Naive thymus-derived CD4-positive, alpha-beta T cell (primary cell): ENCODE measurements at regions of chr1 and their contacts with region 1.

Region 1: GRCh38 chr1:169367486-169368405 is at the starts of genes BLZF1 and NME7:
- DNase-seq: peak; percentile 91 to 99 (median 98)
- ATAC-seq: peak; percentile 99
- H3K4me3 ChIP-seq: peak within 1 kb of the TSS; percentile 87
- H3K4me3 Mint-ChIP-seq: peak within 1 kb of the TSS in 3 of 10 donors; percentile 19 to 72 (median 71)
- H3K27ac ChIP-seq: peak within 1 kb of the TSS; percentile 85
- H3K27ac Mint-ChIP-seq: peak within 1 kb of the TSS in 2 of 9 donors; percentile 73 to 78
- H3K4me1 ChIP-seq: peaks cover 4 to 14% of the 10 kb centered on the region in 2 donors
- H3K4me1 Mint-ChIP-seq: peaks cover 20 to 48% (median 28%) of the 10 kb centered on the region in 7 donors
- H3K27me3 ChIP-seq: no peaks in the 10 kb centered on the region
- H3K27me3 Mint-ChIP-seq: no peaks in the 10 kb centered on the region
- total RNA-seq, gene BLZF1: 9.9 to 26.8 (median 17.5) TPM
- total RNA-seq, gene NME7: 8.6 to 14.5 (median 12.7) TPM

Region 2: DNA sequence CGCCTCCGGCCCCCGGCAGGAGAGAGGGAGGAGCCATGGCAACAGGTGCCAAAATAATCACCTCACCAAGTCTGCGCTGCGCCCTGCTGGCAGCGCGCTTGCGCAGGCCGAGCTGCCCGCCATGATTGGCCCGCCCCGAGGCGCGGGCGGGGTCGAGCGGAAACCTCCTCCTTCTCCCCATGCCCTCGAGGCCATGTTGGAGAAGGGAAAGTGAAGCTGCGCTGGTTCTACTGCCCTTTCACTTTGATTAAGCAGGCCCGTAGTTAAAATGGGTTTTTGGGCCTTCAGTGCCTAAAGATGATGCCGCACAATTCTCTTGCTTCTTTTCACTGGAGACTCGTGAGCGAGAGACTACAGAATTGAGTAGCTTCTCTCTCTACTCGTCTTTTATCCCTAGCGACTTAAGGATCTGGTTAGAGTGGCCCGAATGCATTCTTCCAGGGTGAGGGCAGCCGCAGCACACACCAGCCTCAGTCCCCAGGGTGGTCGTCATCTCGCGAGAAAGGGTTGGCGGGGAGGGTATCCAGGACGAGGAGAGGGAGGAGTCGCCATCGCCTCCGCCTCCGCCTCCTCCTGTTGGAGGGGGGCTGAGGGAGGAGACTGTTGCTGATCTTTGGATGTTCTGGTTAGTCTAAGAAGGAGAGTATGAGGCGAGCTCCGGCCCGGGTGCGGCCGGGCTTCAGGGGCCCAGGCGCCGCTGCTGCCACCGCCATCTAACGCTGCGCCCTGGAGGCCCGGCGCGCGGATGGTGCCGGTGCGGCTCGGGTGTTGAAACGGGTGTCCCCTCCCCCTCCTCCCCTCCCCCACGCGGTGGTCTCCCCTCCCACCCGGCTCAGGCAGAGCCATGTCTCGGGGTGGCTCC is 1431.4 kb before region 1 on chr1 and contains the start of gene DCAF6:
- CTCF ChIA-PET with region 1: no interaction called
- POLR2A ChIA-PET with region 1: no interaction called
- intact Hi-C with region 1: loop called in 1 of 2 experiments (anchors 1 kb)
- DNase-seq: peak; percentile 94 to 99 (median 99)
- ATAC-seq: peak; percentile 89
- H3K4me3 ChIP-seq: peak within 1 kb of the TSS; percentile 89
- H3K4me3 Mint-ChIP-seq: peak within 1 kb of the TSS; percentile 90 to 99 (median 96)
- H3K27ac ChIP-seq: peak within 1 kb of the TSS; percentile 89
- H3K27ac Mint-ChIP-seq: peak within 1 kb of the TSS; percentile 90 to 100 (median 99)
- H3K4me1 ChIP-seq: peaks cover 18 to 31% of the 10 kb centered on the region in 2 donors
- H3K4me1 Mint-ChIP-seq: peaks cover 29 to 58% (median 40%) of the 10 kb centered on the region in 7 donors
- H3K27me3 ChIP-seq: no peaks in the 10 kb centered on the region
- H3K27me3 Mint-ChIP-seq: no peaks in the 10 kb centered on the region
- total RNA-seq, gene DCAF6: 27.4 to 32.7 (median 29.1) TPM

Region 3: DNA sequence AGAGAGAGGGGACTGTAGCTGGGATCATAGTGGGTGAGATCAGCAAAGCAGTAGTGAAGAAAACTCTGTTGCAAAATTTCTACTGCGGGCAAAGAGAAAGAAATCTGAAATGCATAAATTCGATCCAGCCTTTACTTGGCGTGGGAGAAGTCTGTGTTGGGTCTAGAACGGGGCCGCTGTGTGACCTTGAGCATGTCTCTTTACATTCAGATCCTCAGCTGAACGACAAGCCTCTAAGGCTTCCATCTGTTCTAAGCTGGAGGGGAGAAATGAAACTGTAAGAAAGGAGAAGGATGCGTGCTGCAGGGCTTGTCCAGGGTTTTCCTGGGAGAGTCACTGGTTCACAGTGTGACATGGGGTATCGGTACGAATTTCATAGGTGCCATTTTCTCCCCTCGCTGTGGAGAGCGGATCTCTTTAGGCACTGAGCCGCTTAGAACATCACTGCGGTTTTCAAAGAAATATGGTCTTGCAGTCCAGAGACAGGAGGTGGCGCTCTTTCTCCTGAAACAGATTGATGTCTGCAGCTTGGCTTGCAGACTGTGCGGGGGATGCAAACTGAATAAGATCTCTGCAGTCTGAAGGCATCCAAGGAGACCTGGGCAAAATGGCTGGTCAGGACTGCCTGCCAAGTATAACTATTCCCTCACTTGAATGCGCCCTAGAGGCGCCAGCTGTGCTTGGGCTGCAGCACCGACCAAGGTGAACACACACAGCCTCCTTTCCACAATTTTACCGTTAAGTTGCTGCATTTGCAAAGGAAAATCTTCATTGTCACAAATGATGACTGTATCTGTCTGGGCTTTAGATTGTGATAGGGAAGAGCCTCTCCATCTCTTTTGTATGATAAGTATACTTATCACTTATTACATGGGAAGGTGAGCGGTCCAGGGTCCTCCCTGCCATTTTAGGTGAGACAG is 928.0 kb before region 1 on chr1:
- CTCF ChIA-PET with region 1: interaction called, 3 read pairs
- POLR2A ChIA-PET with region 1: no interaction called
- intact Hi-C with region 1: loop called (anchors 5 kb)
- DNase-seq: peak; percentile 45 to 86 (median 80)
- ATAC-seq: peak; percentile 95
- H3K4me3 ChIP-seq: peak overlapping the region; percentile 46
- H3K4me3 Mint-ChIP-seq: peak overlapping the region; percentile 48 to 88 (median 79)
- H3K27ac ChIP-seq: peak overlapping the region; percentile 17
- H3K27ac Mint-ChIP-seq: peak overlapping the region; percentile 20 to 91 (median 59)
- H3K4me1 ChIP-seq: peaks cover 28 to 43% of the 10 kb centered on the region in 2 donors
- H3K4me1 Mint-ChIP-seq: peaks cover 32 to 62% (median 45%) of the 10 kb centered on the region in 7 donors
- H3K27me3 ChIP-seq: no peaks in the 10 kb centered on the region
- H3K27me3 Mint-ChIP-seq: peaks cover 0 to 3% (median 0%) of the 10 kb centered on the region in 5 donors

Region 4: DNA sequence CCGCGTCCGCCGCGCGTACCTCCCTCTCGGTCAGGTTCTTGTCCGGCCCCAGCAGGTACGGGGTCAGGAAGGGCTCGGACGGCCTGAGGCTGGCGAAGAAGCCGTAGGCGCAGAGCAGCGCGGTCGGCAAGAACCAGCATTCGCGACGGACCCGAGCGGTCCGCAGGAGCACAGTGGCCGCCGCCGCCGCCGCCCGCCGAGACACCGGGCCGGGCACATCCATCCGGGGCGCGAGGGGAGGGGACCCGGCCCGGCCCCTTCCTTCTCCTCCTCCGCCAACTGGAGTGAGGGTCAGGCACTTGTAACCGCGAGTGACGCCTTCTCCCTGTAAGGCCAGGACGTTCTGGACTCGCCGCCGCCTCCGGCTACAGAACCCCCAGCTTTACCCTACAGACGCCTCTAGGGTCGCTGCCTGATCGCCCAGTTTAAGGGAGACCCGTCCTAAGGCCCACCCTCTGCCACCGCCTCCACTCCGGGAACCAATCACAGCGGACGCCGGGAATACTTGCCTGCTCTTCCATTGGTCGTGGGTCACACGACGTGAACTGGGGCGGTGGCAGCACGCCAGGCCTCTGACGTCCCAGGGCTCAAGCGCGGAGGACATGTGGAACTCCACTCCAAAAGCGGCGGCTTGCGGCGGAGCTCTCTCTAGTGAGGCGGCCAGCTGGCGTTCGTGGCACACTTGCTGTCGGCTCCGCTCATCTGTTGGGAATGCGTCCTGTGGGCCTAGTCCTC is 118.0 kb after region 1 on chr1 and contains the start of gene SLC19A2:
- CTCF ChIA-PET with region 1: no interaction called
- POLR2A ChIA-PET with region 1: interaction called, 5 read pairs
- intact Hi-C with region 1: loop called (anchors 1 kb)
- DNase-seq: peak; percentile 79 to 94 (median 89)
- ATAC-seq: peak; percentile 99
- H3K4me3 ChIP-seq: peak within 1 kb of the TSS; percentile 66
- H3K4me3 Mint-ChIP-seq: peak within 1 kb of the TSS; percentile 87 to 98 (median 94)
- H3K27ac ChIP-seq: peak within 1 kb of the TSS; percentile 81
- H3K27ac Mint-ChIP-seq: peak within 1 kb of the TSS; percentile 86 to 98 (median 94)
- H3K4me1 ChIP-seq: peaks cover 4 to 12% of the 10 kb centered on the region in 2 donors
- H3K4me1 Mint-ChIP-seq: peaks cover 35 to 56% (median 46%) of the 10 kb centered on the region in 7 donors
- H3K27me3 ChIP-seq: no peaks in the 10 kb centered on the region
- H3K27me3 Mint-ChIP-seq: peaks cover 0 to 8% (median 0%) of the 10 kb centered on the region in 5 donors
- total RNA-seq, gene SLC19A2: 3.7 to 5.9 (median 4.8) TPM

Region 5: DNA sequence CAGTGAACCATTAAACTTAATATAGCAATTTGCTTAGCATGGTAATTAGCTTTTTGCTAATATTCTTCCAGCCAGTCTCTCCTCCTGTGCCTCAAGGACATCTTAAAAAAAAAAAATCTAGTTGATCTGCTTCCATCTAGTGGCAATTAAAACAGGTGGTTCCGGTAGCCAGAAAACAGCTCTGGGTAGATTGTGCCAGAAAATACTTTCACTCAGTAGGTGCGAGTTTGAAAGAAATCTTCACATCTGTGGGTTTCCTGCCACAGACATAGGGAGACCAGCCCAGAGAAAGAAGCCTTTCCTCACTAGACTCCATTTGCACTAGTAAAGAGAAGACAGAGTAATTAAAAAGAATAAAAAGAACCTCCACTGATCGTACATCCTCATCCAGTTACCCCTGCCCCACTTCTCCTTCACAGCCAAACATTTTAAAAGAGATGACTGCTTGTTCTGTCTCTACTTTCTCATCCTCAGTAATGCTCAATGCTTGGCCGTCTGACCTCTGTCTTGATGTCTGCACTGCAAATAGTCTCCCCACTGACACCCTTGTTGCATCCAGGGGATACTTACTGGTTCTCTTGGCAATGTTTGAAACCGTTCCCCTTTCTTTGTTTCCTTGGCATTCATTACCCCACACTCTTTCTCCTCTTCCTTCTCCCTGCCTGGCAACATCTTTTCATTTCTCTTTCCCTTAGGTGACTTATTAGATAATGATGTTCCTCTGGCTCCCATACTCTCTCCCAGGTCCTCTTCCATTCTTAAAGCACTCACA is 326.7 kb after region 1 on chr1:
- CTCF ChIA-PET with region 1: no interaction called
- POLR2A ChIA-PET with region 1: no interaction called
- intact Hi-C with region 1: loop called in 1 of 2 experiments (anchors 5 kb)
- DNase-seq: peak in 7 of 9 donors; percentile 63 to 85 (median 76)
- ATAC-seq: peak; percentile 71
- H3K4me3 ChIP-seq: peak overlapping the region; percentile 18
- H3K4me3 Mint-ChIP-seq: peak overlapping the region in 9 of 10 donors; percentile 21 to 86 (median 71)
- H3K27ac ChIP-seq: peak overlapping the region; percentile 70
- H3K27ac Mint-ChIP-seq: peak overlapping the region in 4 of 9 donors; percentile 86 to 98 (median 94)
- H3K4me1 ChIP-seq: peaks cover 91 to 92% of the 10 kb centered on the region in 2 donors
- H3K4me1 Mint-ChIP-seq: peaks cover 0 to 89% (median 74%) of the 10 kb centered on the region in 7 donors
- H3K27me3 ChIP-seq: no peaks in the 10 kb centered on the region
- H3K27me3 Mint-ChIP-seq: no peaks in the 10 kb centered on the region

Region 6: GRCh38 chr1:170074250-170075157 is 706.8 kb after region 1 on chr1 and contains the start of gene KIFAP3:
- CTCF ChIA-PET with region 1: no interaction called
- POLR2A ChIA-PET with region 1: no interaction called
- intact Hi-C with region 1: loop called (anchors 1 to 2 kb)
- DNase-seq: peak; percentile 84 to 94 (median 92)
- ATAC-seq: peak; percentile 96
- H3K4me3 ChIP-seq: peak within 1 kb of the TSS; percentile 76
- H3K4me3 Mint-ChIP-seq: peak within 1 kb of the TSS; percentile 89 to 99 (median 96)
- H3K27ac ChIP-seq: peak within 1 kb of the TSS; percentile 90
- H3K27ac Mint-ChIP-seq: peak within 1 kb of the TSS; percentile 83 to 98 (median 94)
- H3K4me1 ChIP-seq: peaks cover 15 to 37% of the 10 kb centered on the region in 2 donors
- H3K4me1 Mint-ChIP-seq: peaks cover 34 to 65% (median 57%) of the 10 kb centered on the region in 7 donors
- H3K27me3 ChIP-seq: no peaks in the 10 kb centered on the region
- H3K27me3 Mint-ChIP-seq: peaks cover 0 to 3% (median 0%) of the 10 kb centered on the region in 5 donors
- total RNA-seq, gene KIFAP3: 12.8 to 23.8 (median 20.1) TPM